Activated CD4-positive, alpha-beta memory T cell treated with anti-CD3 and anti-CD28 coated beads for 36 hours (primary cell): ENCODE measurements at regions of chrX and their contacts with region 1.

Region 1: GRCh38 chrX:79182616-79183015 is 38.1 kb downstream of the GPR174 start:
- DNase-seq: peak; percentile 19
- H3K4me3 Mint-ChIP-seq: peak overlapping the region; percentile 61
- H3K27ac Mint-ChIP-seq: peak overlapping the region; percentile 91
- H3K4me1 Mint-ChIP-seq: peaks cover 66% of the 10 kb centered on the region
- H3K27me3 Mint-ChIP-seq: no peaks in the 10 kb centered on the region

Region 2: DNA sequence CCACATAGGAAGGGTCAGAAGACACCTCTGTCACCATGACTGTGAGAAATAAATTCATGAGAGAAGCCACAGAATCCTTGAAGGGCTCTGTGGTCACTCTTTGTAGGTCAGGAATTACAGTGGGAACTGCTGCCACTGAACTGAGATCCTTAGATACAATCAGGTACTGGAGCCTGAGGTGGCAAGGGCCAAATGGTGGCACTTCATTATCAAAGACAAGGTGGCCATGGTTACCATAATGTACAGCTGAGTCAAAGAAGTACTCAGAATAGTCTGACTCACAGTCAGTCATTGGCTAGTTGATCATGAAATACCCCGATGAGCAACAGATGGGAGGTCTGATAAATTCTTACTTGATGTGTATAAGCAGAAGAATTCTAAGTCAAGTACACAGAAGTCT is 655.4 kb before region 1 on chrX:
- CTCF ChIA-PET with region 1: no interaction called
- POLR2A ChIA-PET with region 1: no interaction called
- intact Hi-C with region 1: loop called (anchors 1 kb)
- DNase-seq: peak; percentile 42
- H3K4me3 Mint-ChIP-seq: no peak overlapping the region
- H3K27ac Mint-ChIP-seq: peak overlapping the region; percentile 49
- H3K4me1 Mint-ChIP-seq: peaks cover 31% of the 10 kb centered on the region
- H3K27me3 Mint-ChIP-seq: no peaks in the 10 kb centered on the region

Region 3: DNA sequence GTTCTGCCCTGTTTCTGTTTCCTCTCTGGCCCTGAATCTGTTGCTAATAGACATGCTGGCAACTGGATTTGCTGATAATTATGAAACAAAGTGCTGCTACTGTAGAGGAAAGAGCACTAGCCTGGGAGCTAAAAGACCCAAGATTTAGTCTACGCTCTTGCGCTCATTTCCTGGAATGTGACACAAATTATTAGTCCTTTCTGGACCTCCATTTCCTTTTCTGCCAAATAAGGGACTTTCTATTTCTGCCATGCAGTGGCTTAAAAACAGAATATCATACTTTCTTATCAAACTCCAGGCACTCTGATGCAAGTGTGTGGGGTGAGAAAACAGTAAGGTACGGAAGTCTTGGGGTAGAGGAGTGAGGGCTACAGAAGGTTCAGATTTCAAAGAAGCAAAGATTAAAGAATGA is 86.5 kb before region 1 on chrX:
- CTCF ChIA-PET with region 1: no interaction called
- POLR2A ChIA-PET with region 1: interaction called, 6 read pairs
- intact Hi-C with region 1: loop called (anchors 2 kb)
- DNase-seq: no peak
- H3K4me3 Mint-ChIP-seq: peak overlapping the region; percentile 60
- H3K27ac Mint-ChIP-seq: peak overlapping the region; percentile 89
- H3K4me1 Mint-ChIP-seq: peaks cover 77% of the 10 kb centered on the region
- H3K27me3 Mint-ChIP-seq: no peaks in the 10 kb centered on the region

Region 4: DNA sequence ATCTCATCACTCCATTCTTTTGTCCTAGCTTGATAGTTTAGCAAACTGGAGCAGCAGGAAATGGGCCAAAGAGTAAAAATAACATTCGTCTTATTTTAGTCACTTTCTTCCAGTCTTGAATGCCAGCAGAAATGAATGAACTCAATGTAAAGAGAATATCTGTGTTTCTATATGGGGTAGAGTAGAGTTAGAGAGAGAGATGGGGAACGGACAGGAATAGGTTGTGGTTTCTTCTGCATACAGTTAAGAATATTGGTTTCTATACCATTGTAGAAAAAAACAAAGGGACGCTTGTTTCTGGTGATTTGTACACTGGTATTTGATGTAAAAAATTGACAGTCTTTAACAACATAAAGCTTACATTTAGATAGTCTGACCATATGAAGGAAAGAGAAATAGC is 29.3 kb before region 1 on chrX:
- CTCF ChIA-PET with region 1: interaction called, 6 read pairs
- POLR2A ChIA-PET with region 1: interaction called, 9 read pairs
- intact Hi-C with region 1: loop called (anchors 1 kb)
- DNase-seq: no peak
- H3K4me3 Mint-ChIP-seq: peak overlapping the region; percentile 75
- H3K27ac Mint-ChIP-seq: peak overlapping the region; percentile 94
- H3K4me1 Mint-ChIP-seq: peaks cover 62% of the 10 kb centered on the region
- H3K27me3 Mint-ChIP-seq: no peaks in the 10 kb centered on the region

Region 5: GRCh38 chrX:79167462-79167861 is 15.2 kb before region 1 on chrX:
- CTCF ChIA-PET with region 1: interaction called, 4 read pairs
- POLR2A ChIA-PET with region 1: interaction called, 24 read pairs
- intact Hi-C with region 1: loop called (anchors 1 kb)
- DNase-seq: no peak
- H3K4me3 Mint-ChIP-seq: peak overlapping the region; percentile 66
- H3K27ac Mint-ChIP-seq: peak overlapping the region; percentile 96
- H3K4me1 Mint-ChIP-seq: peaks cover 75% of the 10 kb centered on the region
- H3K27me3 Mint-ChIP-seq: no peaks in the 10 kb centered on the region